A673 (cell line): ENCODE measurements at regions of chr22 and their contacts with region 1.

Region 1: GRCh38 chr22:36387752-36388518 is at the start of gene MYH9:
- DNase-seq: peak; percentile 100
- H3K4me3 ChIP-seq: peak within 1 kb of the TSS; percentile 99
- H3K27ac ChIP-seq: peak within 1 kb of the TSS; percentile 91
- H3K4me1 ChIP-seq: peaks cover 28% of the 10 kb centered on the region
- H3K27me3 ChIP-seq: no peaks in the 10 kb centered on the region
- CTCF ChIP-seq: no peak
- total RNA-seq, gene MYH9: 290 and 323 TPM in 2 replicates

Region 2: DNA sequence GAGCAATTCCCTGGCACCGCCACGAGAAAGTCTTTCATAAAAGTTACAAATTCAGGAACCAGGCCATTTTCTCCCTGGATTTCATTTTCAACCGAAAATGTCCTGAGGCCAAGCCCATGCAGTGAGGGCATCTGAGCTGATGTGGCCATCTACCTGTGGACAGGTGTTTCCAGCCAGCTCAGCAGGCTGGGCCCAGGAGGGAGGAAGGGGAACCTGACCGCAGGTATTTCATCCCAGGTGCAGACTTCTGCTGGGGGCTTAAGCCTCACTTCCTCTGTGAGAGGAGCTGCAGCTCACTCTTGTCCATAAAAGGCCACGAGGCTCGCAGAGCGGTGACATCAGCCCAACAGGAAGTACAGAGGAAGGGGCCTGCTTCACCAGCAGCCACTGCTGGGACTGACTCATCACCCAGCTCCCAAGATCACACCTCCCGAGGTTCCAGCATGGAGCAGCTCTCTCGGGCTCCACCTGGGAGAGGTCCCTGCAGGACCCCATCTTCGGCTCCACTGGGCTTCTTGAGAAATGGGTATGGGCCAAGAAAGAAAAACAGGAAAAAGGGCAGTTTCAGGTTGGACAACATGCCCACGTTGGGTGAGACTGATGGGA is 56.5 kb before region 1 on chr22:
- CTCF ChIA-PET with region 1: no interaction called
- POLR2A ChIA-PET with region 1: interaction called, 5 read pairs
- intact Hi-C with region 1: loop called (anchors 2 kb)
- DNase-seq: peak; percentile 94
- H3K4me3 ChIP-seq: no peak overlapping the region
- H3K27ac ChIP-seq: peak overlapping the region; percentile 96
- H3K4me1 ChIP-seq: peaks cover 79% of the 10 kb centered on the region
- H3K27me3 ChIP-seq: no peaks in the 10 kb centered on the region
- CTCF ChIP-seq: no peak

Region 3: DNA sequence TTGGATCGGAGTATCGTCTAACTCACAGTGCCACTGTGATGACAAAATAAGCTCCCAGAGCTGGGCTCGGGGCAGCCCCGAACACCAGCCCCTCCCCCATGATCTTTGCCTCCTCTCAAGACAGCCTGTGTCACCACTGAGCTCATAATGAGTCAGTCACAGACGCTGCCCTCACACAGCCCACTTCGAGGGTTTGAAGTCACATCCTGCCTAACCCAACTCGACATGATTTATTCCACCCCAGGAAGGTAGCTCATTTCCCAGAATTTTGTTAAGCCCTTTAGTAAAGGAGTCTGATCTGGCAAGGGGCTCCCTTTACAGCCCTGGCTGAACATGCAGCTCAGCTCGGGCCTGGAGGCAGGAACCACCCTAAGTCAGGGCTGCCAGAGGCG is 22.9 kb before region 1 on chr22:
- CTCF ChIA-PET with region 1: no interaction called
- POLR2A ChIA-PET with region 1: interaction called, 10 read pairs
- intact Hi-C with region 1: no loop called
- DNase-seq: peak; percentile 80
- H3K4me3 ChIP-seq: no peak overlapping the region
- H3K27ac ChIP-seq: peak overlapping the region; percentile 60
- H3K4me1 ChIP-seq: peaks cover 70% of the 10 kb centered on the region
- H3K27me3 ChIP-seq: no peaks in the 10 kb centered on the region
- CTCF ChIP-seq: no peak

Region 4: GRCh38 chr22:36454916-36455570 is 67.1 kb after region 1 on chr22:
- CTCF ChIA-PET with region 1: no interaction called
- POLR2A ChIA-PET with region 1: no interaction called
- intact Hi-C with region 1: loop called (anchors 5 kb)
- DNase-seq: peak; percentile 88
- H3K4me3 ChIP-seq: peak overlapping the region; percentile 41
- H3K27ac ChIP-seq: peak overlapping the region; percentile 91
- H3K4me1 ChIP-seq: peaks cover 15% of the 10 kb centered on the region
- H3K27me3 ChIP-seq: no peaks in the 10 kb centered on the region
- CTCF ChIP-seq: 0 out of 2 replicates have a peak, but pooled peaks have one; percentile 21